Prostate gland (tissue), 2 donors: ENCODE measurements at regions of chr18 and their contacts with region 1.

Region 1: DNA sequence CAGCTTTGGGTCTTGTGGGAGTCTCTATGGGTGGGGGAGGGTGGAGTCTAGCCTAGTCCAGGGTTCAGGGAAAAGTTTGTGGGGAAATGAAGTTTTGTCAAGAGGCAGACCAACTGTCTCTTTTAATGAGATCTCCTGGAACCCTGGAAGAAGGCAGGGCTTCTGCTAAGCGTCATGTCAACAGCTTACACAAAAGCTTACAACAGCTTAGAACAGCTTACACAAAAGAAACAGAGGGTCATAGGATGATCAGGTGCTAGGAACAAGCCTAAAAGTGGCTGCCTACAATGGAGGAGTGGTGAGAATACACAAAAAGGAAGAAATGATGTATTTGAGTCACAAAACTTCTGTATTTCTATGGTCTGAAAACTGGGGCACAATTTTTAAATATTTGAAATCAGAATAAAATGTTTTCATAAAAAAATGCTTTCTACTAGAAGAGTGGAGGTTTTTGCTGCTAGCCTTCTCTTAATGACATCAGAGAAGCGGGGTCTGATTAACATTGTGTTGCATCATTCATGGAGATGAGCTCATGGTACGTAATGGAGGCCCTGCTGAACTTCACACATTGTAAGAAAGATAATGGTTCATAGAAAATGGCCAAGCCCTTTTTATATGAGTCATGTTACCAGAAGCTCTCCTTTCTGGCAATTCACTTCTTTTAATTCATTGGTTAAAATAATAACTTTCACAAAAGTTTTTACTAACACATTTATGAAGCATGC is 351.0 kb downstream of the PIK3C3 start:
- DNase-seq: no peak
- H3K4me3 ChIP-seq: no peak overlapping the region
- H3K27ac ChIP-seq: no peak overlapping the region
- H3K4me1 ChIP-seq: no peaks in the 10 kb centered on the region
- H3K27me3 ChIP-seq: no peaks in the 10 kb centered on the region
- CTCF ChIP-seq: no peak
- POLR2A ChIP-seq: no peak

Region 2: DNA sequence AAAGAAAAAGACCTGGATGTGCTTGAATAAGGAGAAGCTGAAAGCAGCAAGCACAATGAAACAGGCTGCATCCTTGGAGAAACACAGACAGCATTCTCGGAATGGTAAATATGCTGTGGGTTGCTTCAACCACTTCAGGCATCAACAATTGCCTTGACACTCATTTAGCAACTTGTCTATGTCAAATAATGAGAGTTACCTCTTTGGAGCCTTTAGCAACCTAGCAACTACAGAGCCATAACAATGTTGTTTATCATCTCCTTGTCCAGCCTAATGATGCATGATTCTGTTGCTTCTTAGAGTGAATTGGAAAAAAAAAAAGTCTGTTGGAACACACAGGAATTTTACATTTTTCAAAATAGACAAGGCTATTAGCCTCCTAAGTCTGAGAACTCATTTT is 59.6 kb after region 1 on chr18:
- intact Hi-C with region 1: no loop called
- DNase-seq: no peak
- H3K4me3 ChIP-seq: no peak overlapping the region
- H3K27ac ChIP-seq: no peak overlapping the region
- H3K4me1 ChIP-seq: no peaks in the 10 kb centered on the region
- H3K27me3 ChIP-seq: no peaks in the 10 kb centered on the region
- CTCF ChIP-seq: no peak
- POLR2A ChIP-seq: no peak

Region 3: DNA sequence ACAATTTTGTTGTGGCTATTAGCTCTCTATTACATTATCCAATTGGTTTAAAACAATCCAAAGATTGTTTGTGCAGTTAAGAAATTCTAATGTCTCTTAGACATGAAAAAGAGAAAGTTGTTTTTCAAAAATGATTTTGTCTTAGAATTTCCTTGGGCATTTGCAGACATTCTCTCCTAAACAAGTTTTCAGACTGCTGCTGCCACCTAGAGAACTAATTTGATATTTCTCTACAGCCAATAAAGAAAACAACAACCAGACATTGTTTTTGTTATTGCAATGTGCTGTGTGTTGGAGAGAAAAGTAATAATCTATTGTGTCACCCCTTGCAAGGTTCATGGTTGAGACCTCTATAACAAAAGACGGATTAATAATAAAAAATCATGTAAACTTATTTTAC is 1090.2 kb after region 1 on chr18:
- intact Hi-C with region 1: loop called (anchors 10 kb)
- DNase-seq: no peak
- H3K4me3 ChIP-seq: no peak overlapping the region
- H3K27ac ChIP-seq: no peak overlapping the region
- H3K4me1 ChIP-seq: no peaks in the 10 kb centered on the region
- H3K27me3 ChIP-seq: no peaks in the 10 kb centered on the region
- CTCF ChIP-seq: peak in 3 of 4 experiments; percentile 13 to 50 (median 31)
- POLR2A ChIP-seq: no peak